Heart left ventricle (tissue), 16 donors: ENCODE measurements at regions of chr20 and their contacts with region 1.

Region 1: DNA sequence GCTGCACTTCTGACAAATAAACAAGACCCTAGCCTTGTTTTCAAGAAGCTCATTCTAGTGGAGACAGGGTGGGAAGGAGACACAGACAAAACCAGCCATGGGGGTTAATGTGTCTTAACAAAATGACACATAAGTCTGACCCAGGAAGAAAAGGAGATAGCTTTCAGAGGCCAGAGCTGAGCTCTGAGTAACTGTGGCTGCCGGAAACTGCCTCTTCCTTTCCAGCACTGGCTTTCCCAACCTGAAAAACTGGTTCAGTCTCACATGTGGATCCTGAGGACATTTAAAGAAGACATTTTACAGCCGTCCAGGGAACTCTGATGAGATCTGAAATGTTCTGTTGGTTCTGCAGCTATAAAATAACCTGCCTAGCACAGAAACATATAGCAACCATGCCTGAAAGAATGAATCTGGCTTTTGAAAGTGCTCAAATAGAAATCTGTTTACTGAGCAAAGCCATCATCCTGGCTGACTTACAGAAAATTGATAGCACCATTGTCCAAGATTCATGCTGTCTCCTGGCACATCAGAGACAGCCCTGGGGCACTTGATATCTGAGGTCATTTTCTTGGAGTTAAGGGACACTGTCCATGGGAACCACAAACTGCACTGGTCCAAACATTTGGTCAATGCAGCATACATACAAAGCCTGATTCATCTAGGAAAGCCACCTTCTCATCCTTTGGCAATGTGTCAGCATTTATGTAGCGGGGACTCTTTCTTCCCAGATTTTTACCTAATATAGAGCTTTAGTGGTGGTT is 83.2 kb upstream of the PAX1 start:
- DNase-seq: no peak
- ATAC-seq: no peak
- H3K4me3 ChIP-seq: no peak overlapping the region
- H3K27ac ChIP-seq: no peak overlapping the region
- H3K4me1 ChIP-seq: no peaks in the 10 kb centered on the region
- H3K27me3 ChIP-seq: peaks cover 0 to 31% (median 0%) of the 10 kb centered on the region in 9 donors
- CTCF ChIP-seq: no peak
- POLR2A ChIP-seq: no peak

Region 2: GRCh38 chr20:21583486-21584168 is 38.6 kb before region 1 on chr20:
- intact Hi-C with region 1: loop called in 1 of 10 experiments (anchors 5 kb)
- DNase-seq: no peak
- ATAC-seq: no peak
- H3K4me3 ChIP-seq: no peak overlapping the region
- H3K27ac ChIP-seq: no peak overlapping the region
- H3K4me1 ChIP-seq: no peaks in the 10 kb centered on the region
- H3K27me3 ChIP-seq: peaks cover 0 to 46% (median 6%) of the 10 kb centered on the region in 9 donors
- CTCF ChIP-seq: no peak
- POLR2A ChIP-seq: no peak